CD4-positive, alpha-beta memory T cell (primary cell): ENCODE measurements at regions of chr6 and their contacts with region 1.

Region 1: DNA sequence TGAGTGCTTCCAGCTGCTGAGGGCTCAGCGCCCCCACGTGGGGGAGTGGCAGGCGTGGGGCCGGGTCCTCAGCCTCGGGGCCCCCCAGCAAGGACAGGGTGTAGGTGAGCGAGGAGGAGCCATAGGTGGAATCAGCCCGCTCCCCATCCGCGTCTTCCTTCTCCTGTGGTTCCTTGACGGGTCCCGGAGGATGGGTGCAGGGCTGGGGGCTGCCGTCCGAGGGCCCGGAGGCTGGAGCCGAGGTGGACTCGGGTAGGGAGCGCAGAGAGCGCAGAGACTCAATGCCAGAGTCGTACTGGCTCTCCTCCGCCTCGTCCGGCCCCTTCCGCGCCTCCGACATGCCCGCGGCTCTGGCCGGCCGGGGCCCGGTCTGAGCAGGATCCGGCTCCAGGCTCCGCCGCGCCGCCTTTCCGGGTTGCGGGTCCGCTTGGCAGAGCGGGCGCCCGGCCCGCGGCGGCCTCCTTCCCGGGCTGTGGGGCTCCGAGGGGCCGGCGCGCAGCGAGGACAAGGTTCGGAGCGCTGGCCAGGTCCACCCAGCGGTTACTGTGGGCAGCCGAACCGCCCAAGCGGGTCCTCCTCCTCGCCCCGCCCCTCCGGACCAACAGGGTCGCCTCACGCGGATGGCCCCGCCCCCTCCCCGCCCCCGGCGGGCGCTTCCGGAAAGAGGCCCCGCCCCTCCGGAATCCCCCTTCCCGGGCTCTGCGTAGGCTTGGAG is at the start of gene NFKBIE:
- DNase-seq: peak; percentile 93 to 96 (median 94)
- H3K4me3 ChIP-seq: peak within 1 kb of the TSS; percentile 83 to 89
- H3K4me3 Mint-ChIP-seq: peak within 1 kb of the TSS; percentile 73 to 96 (median 93)
- H3K27ac ChIP-seq: peak within 1 kb of the TSS; percentile 96
- H3K27ac Mint-ChIP-seq: peak within 1 kb of the TSS; percentile 95 to 98 (median 97)
- H3K4me1 ChIP-seq: peaks cover 38% of the 10 kb centered on the region
- H3K4me1 Mint-ChIP-seq: peaks cover 17 to 48% (median 40%) of the 10 kb centered on the region in 4 donors
- H3K27me3 ChIP-seq: peaks cover 12% of the 10 kb centered on the region
- H3K27me3 Mint-ChIP-seq: peaks cover 8 to 18% of the 10 kb centered on the region in 2 donors
- total RNA-seq, gene NFKBIE: 12.7 to 15.0 TPM

Region 2: GRCh38 chr6:44172731-44173500 is 92.2 kb before region 1 on chr6:
- CTCF ChIA-PET with region 1: interaction called, 8 read pairs
- POLR2A ChIA-PET with region 1: no interaction called
- intact Hi-C with region 1: loop called (anchors 1 kb)
- DNase-seq: peak; percentile 53 to 68 (median 62)
- H3K4me3 ChIP-seq: no peak overlapping the region
- H3K4me3 Mint-ChIP-seq: no peak overlapping the region
- H3K27ac ChIP-seq: no peak overlapping the region
- H3K27ac Mint-ChIP-seq: peak overlapping the region in 2 of 7 donors; percentile 0 to 48
- H3K4me1 ChIP-seq: peaks cover 9% of the 10 kb centered on the region
- H3K4me1 Mint-ChIP-seq: peaks cover 0 to 5% (median 2%) of the 10 kb centered on the region in 4 donors
- H3K27me3 ChIP-seq: no peaks in the 10 kb centered on the region
- H3K27me3 Mint-ChIP-seq: peaks cover 8 to 16% of the 10 kb centered on the region in 2 donors

Region 3: GRCh38 chr6:44246663-44247337 is 18.4 kb before region 1 on chr6 and contains the start of gene HSP90AB1:
- CTCF ChIA-PET with region 1: interaction called, 82 read pairs
- POLR2A ChIA-PET with region 1: interaction called, 217 read pairs
- intact Hi-C with region 1: loop called (anchors 1 kb)
- DNase-seq: peak; percentile 96 to 99 (median 97)
- H3K4me3 ChIP-seq: peak within 1 kb of the TSS; percentile 83 to 96
- H3K4me3 Mint-ChIP-seq: peak within 1 kb of the TSS; percentile 97 to 100 (median 99)
- H3K27ac ChIP-seq: peak within 1 kb of the TSS; percentile 97
- H3K27ac Mint-ChIP-seq: peak within 1 kb of the TSS; percentile 95 to 99 (median 99)
- H3K4me1 ChIP-seq: peaks cover 33% of the 10 kb centered on the region
- H3K4me1 Mint-ChIP-seq: peaks cover 27 to 62% (median 36%) of the 10 kb centered on the region in 4 donors
- H3K27me3 ChIP-seq: no peaks in the 10 kb centered on the region
- H3K27me3 Mint-ChIP-seq: peaks cover 2 to 4% of the 10 kb centered on the region in 2 donors
- total RNA-seq, gene HSP90AB1: 303 to 324 TPM

Region 4: GRCh38 chr6:44304282-44305199 is 39.4 kb after region 1 on chr6:
- CTCF ChIA-PET with region 1: interaction called, 63 read pairs
- POLR2A ChIA-PET with region 1: interaction called, 5 read pairs
- intact Hi-C with region 1: loop called (anchors 1 kb)
- DNase-seq: peak in 4 of 5 donors; percentile 30 to 37 (median 36)
- H3K4me3 ChIP-seq: no peak overlapping the region
- H3K4me3 Mint-ChIP-seq: no peak overlapping the region
- H3K27ac ChIP-seq: no peak overlapping the region
- H3K27ac Mint-ChIP-seq: peak overlapping the region in 2 of 7 donors; percentile 40 to 43
- H3K4me1 ChIP-seq: no peaks in the 10 kb centered on the region
- H3K4me1 Mint-ChIP-seq: peaks cover 0 to under 1% (median 0%) of the 10 kb centered on the region in 4 donors
- H3K27me3 ChIP-seq: no peaks in the 10 kb centered on the region
- H3K27me3 Mint-ChIP-seq: no peaks in the 10 kb centered on the region

Region 5: DNA sequence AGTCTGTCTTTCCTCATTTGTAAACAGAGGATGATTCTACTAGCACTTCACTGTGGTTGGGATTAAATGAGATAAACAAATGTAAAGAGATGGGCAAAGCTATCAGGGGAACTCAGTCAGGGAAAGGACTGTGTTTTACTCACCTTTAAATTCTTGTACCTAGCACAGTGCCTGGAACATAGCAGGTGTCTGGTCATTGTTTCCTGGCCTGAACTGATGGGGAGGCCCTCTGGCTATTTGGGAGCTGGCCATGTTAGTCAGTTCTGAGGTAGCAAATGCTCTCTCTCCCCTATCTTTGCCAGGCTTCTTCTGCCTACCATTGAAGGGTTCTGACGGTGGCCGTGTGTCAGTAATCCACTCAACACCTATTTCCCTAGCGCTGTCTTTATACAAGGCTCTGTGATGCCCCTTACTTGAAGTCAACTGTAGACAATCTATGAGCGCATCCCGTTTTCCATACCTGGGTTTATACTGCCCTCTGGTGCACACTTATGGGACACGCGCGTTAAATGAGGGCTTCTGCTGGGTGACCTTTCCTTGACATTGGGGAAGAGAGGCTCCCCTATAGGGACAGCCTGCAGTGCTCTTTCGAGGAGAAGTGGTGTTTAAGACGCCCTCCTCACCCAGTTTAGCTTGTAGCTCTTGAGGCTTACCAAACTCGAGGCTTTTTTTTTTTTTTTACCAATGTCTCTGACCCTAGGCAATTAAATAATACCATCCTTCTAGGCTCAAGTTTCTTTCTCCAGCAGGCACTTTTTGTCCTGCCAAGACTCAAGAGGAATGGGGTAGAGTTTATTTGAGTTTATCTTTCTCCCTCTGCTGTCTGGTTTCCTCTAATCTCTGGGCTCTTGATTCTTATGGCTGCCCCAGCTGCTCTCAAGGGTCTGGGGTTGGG is 73.3 kb after region 1 on chr6:
- CTCF ChIA-PET with region 1: interaction called, 54 read pairs
- POLR2A ChIA-PET with region 1: no interaction called
- intact Hi-C with region 1: loop called (anchors 1 kb)
- DNase-seq: peak; percentile 53 to 67 (median 65)
- H3K4me3 ChIP-seq: no peak overlapping the region
- H3K4me3 Mint-ChIP-seq: no peak overlapping the region
- H3K27ac ChIP-seq: no peak overlapping the region
- H3K27ac Mint-ChIP-seq: peak overlapping the region in 1 of 7 donors; percentile 12
- H3K4me1 ChIP-seq: no peaks in the 10 kb centered on the region
- H3K4me1 Mint-ChIP-seq: no peaks in the 10 kb centered on the region
- H3K27me3 ChIP-seq: peaks cover 12% of the 10 kb centered on the region
- H3K27me3 Mint-ChIP-seq: peaks cover 16 to 26% of the 10 kb centered on the region in 2 donors